AG04450 (cell line): ENCODE measurements at regions of chr7 and their contacts with region 1.

Region 1: GRCh38 chr7:99312316-99313203 is 13.1 kb upstream of the ARPC1A start:
- DNase-seq: peak; percentile 26
- H3K4me3 ChIP-seq: no peak overlapping the region
- H3K27ac ChIP-seq: no peak overlapping the region
- H3K27me3 ChIP-seq: no peaks in the 10 kb centered on the region
- CTCF ChIP-seq: peak; percentile 93

Region 2: GRCh38 chr7:99014113-99014985 is 298.2 kb before region 1 on chr7:
- CTCF ChIA-PET with region 1: interaction called, 11 read pairs
- POLR2A ChIA-PET with region 1: no interaction called
- DNase-seq: no peak
- H3K4me3 ChIP-seq: no peak overlapping the region
- H3K27ac ChIP-seq: no peak overlapping the region
- H3K27me3 ChIP-seq: no peaks in the 10 kb centered on the region
- CTCF ChIP-seq: no peak

Region 3: DNA sequence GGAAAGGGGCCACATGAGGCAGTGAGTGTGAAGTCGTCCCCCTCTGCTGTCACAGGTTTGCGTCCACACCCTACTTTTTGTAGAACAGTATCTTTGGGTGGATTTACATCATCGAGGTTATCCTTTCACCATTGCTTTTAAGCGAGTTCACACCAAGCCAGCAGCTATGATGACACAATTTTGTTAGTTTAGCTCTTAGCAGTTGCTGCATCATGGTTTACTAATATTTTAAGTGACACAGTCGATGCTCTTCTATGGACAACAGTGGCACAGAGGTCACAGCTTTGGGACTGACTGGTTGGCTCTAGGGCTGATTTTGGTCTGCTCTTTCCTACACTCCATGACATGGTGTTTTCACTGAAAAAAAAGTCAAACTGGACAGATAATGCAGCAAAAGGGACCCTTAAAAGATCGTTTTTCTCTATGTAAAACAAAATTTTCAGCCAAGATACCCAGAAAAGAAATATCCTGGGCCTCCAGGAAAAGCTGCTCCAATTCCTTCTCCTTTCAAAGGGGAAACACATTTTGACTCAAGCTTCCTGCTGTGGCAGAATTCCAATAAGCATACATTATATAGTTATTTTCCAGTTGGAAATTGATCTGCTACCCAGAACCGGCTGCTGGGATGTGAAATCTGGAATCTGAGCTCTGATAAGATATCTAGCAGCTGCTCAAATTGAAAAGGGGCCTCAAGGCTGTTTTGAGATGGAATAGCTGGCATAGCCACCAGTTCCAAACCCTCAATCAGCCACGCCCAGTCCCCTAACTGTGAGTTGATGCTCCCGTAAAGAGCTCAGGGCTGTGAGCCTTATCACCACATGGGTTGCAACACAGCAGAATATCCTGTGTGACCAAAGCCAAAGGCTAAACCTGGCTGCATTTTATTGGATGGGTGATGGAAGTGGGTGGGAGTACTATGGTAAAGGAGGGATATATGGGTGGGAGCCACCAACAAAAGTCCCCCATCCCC is 282.8 kb before region 1 on chr7:
- CTCF ChIA-PET with region 1: interaction called, 10 read pairs
- POLR2A ChIA-PET with region 1: no interaction called
- DNase-seq: no peak
- H3K4me3 ChIP-seq: no peak overlapping the region
- H3K27ac ChIP-seq: no peak overlapping the region
- H3K27me3 ChIP-seq: no peaks in the 10 kb centered on the region
- CTCF ChIP-seq: no peak

Region 4: DNA sequence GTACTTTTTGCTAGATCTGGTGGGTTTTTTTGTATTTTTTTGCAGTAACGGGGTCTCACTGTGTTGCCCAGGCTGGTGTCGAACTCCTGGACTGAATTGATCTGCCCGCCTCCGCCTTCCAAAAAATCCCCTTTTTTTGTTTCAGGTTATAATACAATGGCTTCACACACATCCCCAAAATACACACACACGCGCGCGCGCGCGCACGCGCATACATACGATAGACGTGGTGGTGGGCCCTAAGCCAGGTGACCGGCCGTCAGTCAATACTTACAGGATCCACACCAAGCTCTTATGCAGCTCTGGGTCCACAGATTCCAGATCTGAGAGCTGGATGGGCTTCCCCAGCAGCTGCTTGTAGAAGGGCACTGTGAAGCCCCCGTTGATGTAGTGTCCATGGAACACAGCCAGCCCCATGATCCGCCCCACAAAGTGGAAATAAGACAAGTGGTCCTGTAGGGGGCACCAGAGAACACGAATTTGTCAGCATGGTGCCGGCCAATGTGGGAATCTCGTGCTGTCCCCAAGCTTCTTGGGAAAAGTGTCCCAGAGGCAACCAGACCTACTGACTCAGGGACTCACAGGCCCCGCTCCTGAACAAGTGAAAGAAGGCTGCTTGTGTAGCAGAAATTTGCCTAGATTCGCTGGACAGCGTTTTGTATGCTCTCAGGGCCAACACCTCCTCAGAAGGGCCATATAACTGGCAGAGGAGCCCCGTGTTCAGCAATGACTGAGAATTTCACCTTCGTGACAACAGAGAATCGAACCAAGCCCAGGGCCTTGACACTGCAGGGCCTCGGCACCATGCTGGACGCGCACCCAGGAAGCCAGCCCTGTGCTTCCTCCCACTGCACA is 272.2 kb before region 1 on chr7:
- CTCF ChIA-PET with region 1: interaction called, 24 read pairs
- POLR2A ChIA-PET with region 1: no interaction called
- DNase-seq: peak; percentile 61
- H3K4me3 ChIP-seq: no peak overlapping the region
- H3K27ac ChIP-seq: peak overlapping the region; percentile 57
- H3K27me3 ChIP-seq: no peaks in the 10 kb centered on the region
- CTCF ChIP-seq: peak; percentile 74

Region 5: GRCh38 chr7:99290980-99291607 is 21.5 kb before region 1 on chr7:
- CTCF ChIA-PET with region 1: interaction called, 19 read pairs
- POLR2A ChIA-PET with region 1: no interaction called
- DNase-seq: peak; percentile 74
- H3K4me3 ChIP-seq: no peak overlapping the region
- H3K27ac ChIP-seq: no peak overlapping the region
- H3K27me3 ChIP-seq: no peaks in the 10 kb centered on the region
- CTCF ChIP-seq: no peak

Region 6: GRCh38 chr7:99325545-99326407 is 13.2 kb after region 1 on chr7 and contains the start of gene ARPC1A:
- CTCF ChIA-PET with region 1: interaction called, 10 read pairs
- POLR2A ChIA-PET with region 1: no interaction called
- DNase-seq: peak; percentile 82
- H3K4me3 ChIP-seq: peak within 1 kb of the TSS; percentile 97
- H3K27ac ChIP-seq: peak within 1 kb of the TSS; percentile 47
- H3K27me3 ChIP-seq: no peaks in the 10 kb centered on the region
- CTCF ChIP-seq: peak; percentile 30
- polyA plus RNA-seq, gene ARPC1A: 259 and 282 TPM in 2 replicates

Region 7: DNA sequence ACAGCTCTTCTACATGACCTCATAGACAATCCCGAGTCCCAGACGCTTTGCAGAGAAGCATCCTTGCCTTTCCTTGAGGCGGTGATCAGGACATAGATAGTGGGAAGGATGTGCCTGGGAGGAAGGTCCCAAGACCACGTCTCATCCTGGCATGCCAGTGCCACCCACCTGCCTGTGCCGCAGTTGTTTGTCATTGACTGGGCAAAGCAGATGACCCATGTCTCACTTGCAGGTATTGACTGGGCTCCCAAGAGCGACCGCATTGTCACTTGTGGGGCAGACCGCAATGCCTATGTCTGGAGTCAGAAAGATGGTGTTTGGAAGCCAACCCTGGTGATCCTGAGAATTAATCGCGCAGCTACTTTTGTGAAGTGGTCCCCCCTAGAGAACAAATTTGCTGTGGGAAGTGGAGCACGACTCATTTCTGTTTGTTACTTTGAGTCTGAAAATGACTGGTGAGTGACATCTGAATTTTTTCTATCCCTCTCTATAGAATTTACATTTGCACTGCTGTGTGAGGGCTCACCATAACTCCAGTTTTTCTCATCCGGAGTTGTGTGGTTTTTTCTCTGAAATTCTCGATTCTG is 31.6 kb after region 1 on chr7:
- CTCF ChIA-PET with region 1: no interaction called
- POLR2A ChIA-PET with region 1: no interaction called
- DNase-seq: no peak
- H3K4me3 ChIP-seq: no peak overlapping the region
- H3K27ac ChIP-seq: no peak overlapping the region
- H3K27me3 ChIP-seq: no peaks in the 10 kb centered on the region
- CTCF ChIP-seq: no peak